ENCODE measurements at regions of chr9 and their contacts with region 1.

Region 1: DNA sequence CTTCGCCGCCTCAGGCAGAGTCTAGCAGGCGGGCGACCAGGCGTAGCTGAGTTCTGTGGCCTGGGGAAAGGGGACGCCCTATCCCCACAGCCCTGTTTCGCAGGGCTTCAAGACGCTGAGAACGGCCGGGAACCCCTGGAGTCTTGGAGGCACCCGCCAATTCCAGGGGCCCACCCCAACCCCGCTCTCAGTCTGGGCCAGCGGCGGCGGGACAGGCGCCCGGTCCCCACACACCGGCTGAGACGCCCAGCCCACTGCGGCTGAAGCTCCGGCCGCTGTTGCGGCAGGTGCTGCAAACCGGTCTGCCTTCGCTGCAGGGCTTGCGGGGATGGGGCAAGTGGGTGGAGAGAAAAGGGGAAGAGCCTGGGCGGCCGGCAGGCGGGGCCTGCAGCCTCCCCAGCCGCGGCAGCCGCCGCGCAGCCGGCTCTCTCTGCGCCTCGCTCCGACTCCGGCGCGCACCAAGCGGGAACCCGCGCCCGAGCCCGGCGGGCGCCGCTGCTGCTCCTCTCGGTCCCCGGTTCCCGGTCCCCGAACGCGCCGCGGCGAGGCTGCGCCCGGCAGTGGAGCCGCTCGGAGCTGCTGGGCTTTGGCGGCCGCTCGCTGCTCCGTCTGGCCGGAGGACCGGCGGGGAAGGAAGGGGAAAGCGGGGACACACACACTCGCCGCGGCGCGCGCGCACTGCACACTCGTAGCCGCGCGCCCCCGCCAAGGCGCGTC is at the start of gene PIP5K1B:
- DNase-seq: peak; percentile 44
- H3K4me3 Mint-ChIP-seq: peak within 1 kb of the TSS; percentile 85
- H3K27ac Mint-ChIP-seq: peak within 1 kb of the TSS; percentile 81
- H3K4me1 Mint-ChIP-seq: peaks cover 27% of the 10 kb centered on the region
- H3K27me3 Mint-ChIP-seq: peaks cover 57% of the 10 kb centered on the region
- total RNA-seq, gene PIP5K1B: 77.4 and 78.5 TPM in 2 replicates

Region 2: DNA sequence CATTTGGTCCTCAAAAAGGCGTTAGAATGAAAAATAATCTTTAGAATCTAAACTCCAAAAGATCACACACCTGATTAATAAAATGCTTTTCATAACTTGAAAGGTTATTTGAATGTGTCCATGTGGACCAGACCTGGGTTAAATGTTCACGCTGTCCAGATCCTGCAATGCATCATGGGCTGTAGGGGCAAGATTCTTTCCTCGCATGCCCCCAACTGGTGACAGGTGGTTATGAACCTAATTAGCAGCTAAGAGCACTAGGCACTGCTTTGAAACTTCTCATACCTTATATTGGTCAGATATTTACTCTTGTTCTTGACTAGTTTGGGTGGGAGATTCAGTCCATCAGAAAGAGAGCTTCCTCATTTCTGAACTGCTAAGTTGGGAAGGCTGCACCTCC is 19.2 kb before region 1 on chr9:
- intact Hi-C with region 1: loop called (anchors 1 kb)
- DNase-seq: no peak
- H3K4me3 Mint-ChIP-seq: no peak overlapping the region
- H3K27ac Mint-ChIP-seq: no peak overlapping the region
- H3K4me1 Mint-ChIP-seq: peaks cover 11% of the 10 kb centered on the region
- H3K27me3 Mint-ChIP-seq: no peaks in the 10 kb centered on the region

Region 3: DNA sequence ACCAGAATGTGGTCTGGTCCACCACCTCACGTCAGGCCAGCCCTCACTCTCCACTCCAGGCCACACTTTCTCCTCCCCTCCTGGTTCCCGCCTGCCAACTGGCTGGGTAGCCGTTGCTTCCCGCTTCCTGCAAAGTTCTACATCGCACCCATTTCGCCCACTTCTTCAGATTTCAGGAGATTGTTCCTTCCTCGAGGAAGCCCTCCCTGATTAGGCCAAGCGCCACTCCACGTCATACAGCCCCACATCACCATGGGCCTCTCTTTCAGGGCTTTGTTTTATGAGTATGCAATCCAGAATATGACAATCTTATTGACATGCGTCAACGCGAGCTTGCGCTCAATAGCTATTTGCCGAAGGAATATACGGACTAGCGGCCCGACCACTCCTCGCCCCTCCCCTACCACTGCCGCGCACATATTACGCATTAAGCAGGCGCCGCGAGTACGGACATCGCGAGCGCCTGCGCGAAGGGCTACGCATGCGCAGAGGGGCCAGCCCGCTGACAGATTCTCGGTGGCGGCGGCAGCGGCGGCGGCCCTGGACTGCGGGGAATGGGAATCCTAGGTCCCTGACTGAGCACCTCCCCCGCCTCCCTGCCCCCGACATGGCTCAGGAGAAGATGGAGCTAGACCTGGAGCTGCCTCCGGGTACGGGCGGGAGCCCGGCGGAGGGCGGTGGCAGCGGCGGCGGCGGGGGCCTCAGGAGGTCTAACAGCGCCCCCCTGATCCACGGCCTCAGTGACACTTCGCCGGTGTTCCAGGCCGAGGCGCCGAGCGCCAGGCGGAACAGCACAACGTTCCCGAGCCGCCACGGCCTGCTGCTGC is 74.8 kb after region 1 on chr9:
- intact Hi-C with region 1: loop called (anchors 2 kb)
- DNase-seq: peak; percentile 89
- H3K4me3 Mint-ChIP-seq: no peak overlapping the region
- H3K27ac Mint-ChIP-seq: no peak overlapping the region
- H3K4me1 Mint-ChIP-seq: peaks cover 4% of the 10 kb centered on the region
- H3K27me3 Mint-ChIP-seq: no peaks in the 10 kb centered on the region

Region 4: DNA sequence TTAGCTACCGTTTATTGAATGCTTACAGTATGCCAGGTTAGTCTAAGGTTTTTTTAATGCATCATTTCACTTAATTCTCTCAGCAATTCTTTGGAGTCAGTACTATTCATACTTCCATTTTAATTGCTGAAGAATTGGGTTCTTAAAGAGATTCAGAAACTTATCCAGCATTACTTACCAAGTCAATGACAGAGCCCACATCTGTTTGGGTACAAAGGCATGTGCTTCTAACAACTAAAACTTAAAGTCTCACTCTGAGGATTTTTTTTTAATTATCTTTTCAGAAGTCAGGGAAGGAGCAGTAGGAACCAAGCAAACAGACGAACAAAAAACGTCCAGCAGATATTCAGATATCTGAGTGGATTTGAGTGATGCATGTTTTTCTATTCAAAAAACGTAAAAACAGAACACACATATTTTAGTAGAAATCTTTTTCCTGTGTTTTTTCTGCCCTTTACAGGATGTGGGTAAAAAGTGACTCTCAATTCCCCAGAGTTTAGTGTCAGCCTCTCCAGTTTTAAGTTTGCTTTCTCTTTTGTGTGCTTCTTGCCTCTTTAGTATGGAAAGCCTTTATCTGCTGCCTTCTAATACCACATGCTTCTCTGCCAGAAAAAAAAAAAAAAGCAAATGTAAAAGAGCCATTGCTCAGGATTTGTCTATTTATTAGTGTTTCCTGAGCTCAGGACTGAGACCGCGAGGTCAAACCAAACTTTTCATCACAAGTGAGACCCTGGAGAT is 190.9 kb after region 1 on chr9:
- intact Hi-C with region 1: no loop called
- DNase-seq: no peak
- H3K4me3 Mint-ChIP-seq: peak overlapping the region; percentile 70
- H3K27ac Mint-ChIP-seq: peak overlapping the region; percentile 84
- H3K4me1 Mint-ChIP-seq: peaks cover 51% of the 10 kb centered on the region
- H3K27me3 Mint-ChIP-seq: no peaks in the 10 kb centered on the region

Region 5: DNA sequence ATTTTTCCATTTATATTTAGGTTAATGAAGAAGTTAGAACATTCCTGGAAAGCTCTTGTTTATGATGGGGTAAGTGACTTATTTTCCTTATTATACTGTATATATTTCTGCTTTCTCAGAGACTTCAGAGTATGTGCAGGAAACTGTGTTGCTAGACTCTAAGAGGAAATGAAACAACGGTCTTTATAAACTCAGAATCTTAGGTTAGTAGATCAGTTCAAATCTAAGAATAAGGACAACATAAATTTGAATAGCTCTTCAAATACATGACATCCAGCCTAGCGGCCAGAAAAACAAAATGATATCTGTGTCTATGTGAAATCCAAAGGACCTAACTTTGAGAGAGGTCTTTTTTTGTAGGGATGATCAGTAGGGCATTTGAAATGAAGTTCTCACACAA is 214.7 kb after region 1 on chr9:
- intact Hi-C with region 1: loop called (anchors 5 kb)
- DNase-seq: no peak
- H3K4me3 Mint-ChIP-seq: no peak overlapping the region
- H3K27ac Mint-ChIP-seq: no peak overlapping the region
- H3K4me1 Mint-ChIP-seq: peaks cover 45% of the 10 kb centered on the region
- H3K27me3 Mint-ChIP-seq: peaks cover 3% of the 10 kb centered on the region

Region 6: GRCh38 chr9:69027355-69028096 is 322.6 kb after region 1 on chr9:
- intact Hi-C with region 1: loop called (anchors 1 kb)
- DNase-seq: peak; percentile 32
- H3K4me3 Mint-ChIP-seq: no peak overlapping the region
- H3K27ac Mint-ChIP-seq: peak overlapping the region; percentile 18
- H3K4me1 Mint-ChIP-seq: peaks cover 51% of the 10 kb centered on the region
- H3K27me3 Mint-ChIP-seq: peaks cover 1% of the 10 kb centered on the region

Measured in activated T-helper 1 cell treated with anti-CD3 and anti-CD28 coated beads, Interleukin-12 subunit alpha, Interleukin-12 subunit beta, Interleukin-2, Interleukin-4 antibody, amounts not matched to agents 30 ng/mL and 10 ng/mL and 1 ng/mL, durations not matched to agents 14 hours and 24 hours and 36 hours (primary cell).